ENCODE measurements at regions of chr14 and their contacts with region 1.

Region 1: GRCh38 chr14:103546652-103547454 is 15.6 kb downstream of the BAG5 start:
- DNase-seq: no peak
- ATAC-seq: peak; percentile 56
- H3K4me3 ChIP-seq: no peak overlapping the region
- H3K27ac ChIP-seq: no peak overlapping the region
- H3K4me1 ChIP-seq: peaks cover 38% of the 10 kb centered on the region
- H3K27me3 ChIP-seq: no peaks in the 10 kb centered on the region
- CTCF ChIP-seq: peak; percentile 87

Region 2: GRCh38 chr14:103483600-103483999 is 63.3 kb before region 1 on chr14:
- CTCF ChIA-PET with region 1: interaction called, 11 read pairs
- POLR2A ChIA-PET with region 1: no interaction called
- in situ Hi-C with region 1: no loop called
- intact Hi-C with region 1: no loop called
- DNase-seq: peak; percentile 30
- ATAC-seq: no peak
- H3K4me3 ChIP-seq: no peak overlapping the region
- H3K27ac ChIP-seq: no peak overlapping the region
- H3K4me1 ChIP-seq: no peaks in the 10 kb centered on the region
- H3K27me3 ChIP-seq: no peaks in the 10 kb centered on the region
- CTCF ChIP-seq: no peak

Region 3: GRCh38 chr14:103518422-103519042 is 28.3 kb before region 1 on chr14:
- CTCF ChIA-PET with region 1: interaction called, 13 read pairs
- POLR2A ChIA-PET with region 1: no interaction called
- in situ Hi-C with region 1: no loop called
- intact Hi-C with region 1: no loop called
- DNase-seq: no peak
- ATAC-seq: peak; percentile 64
- H3K4me3 ChIP-seq: no peak overlapping the region
- H3K27ac ChIP-seq: peak overlapping the region; percentile 80
- H3K4me1 ChIP-seq: peaks cover 39% of the 10 kb centered on the region
- H3K27me3 ChIP-seq: no peaks in the 10 kb centered on the region
- CTCF ChIP-seq: peak; percentile 92

Measured in Panc1 (cell line).